ENCODE measurements at regions of chr13 and their contacts with region 1.

Region 1: DNA sequence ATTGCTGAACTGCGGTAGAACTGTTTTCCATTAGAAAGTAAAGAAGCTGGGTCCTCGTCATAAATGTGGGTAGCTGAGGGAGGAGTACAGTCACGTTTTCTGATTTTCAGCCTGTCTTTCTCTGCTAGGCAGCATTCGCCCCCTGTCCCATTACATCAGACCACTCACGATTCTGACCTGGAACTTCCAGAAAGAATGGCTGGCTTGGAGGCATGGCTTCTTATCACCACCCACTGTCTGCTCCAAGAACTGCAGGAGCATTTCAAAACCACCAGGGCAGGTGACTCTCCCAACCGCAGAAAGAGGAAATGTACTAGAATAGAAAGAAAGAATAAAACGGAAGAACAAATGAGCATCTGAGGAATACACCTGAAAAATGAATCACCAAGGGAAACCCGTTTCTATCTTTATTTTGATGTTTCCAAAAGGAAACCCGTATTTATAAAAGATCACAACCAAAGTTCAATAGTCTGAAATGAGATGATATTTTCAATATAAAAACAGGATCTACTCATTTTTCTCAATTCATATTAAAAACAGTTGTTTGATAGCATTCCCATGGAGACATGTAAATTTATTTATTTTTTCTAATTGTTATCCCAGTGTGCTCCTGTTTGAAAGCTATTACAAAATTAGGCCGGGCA is 22.1 kb upstream of the POMP start:
- DNase-seq: peak; percentile 85
- H3K4me3 ChIP-seq: no peak overlapping the region
- H3K27ac ChIP-seq: no peak overlapping the region
- H3K4me1 ChIP-seq: peaks cover 18% of the 10 kb centered on the region
- H3K27me3 ChIP-seq: no peaks in the 10 kb centered on the region
- CTCF ChIP-seq: peak; percentile 81 to 92
- POLR2A ChIP-seq: no peak

Region 2: GRCh38 chr13:28313579-28313978 is 323.2 kb before region 1 on chr13:
- CTCF ChIA-PET with region 1: interaction called, 13 read pairs
- POLR2A ChIA-PET with region 1: no interaction called
- dilution Hi-C with region 1: no loop called
- intact Hi-C with region 1: loop called (anchors 1 kb)
- DNase-seq: peak; percentile 66
- H3K4me3 ChIP-seq: no peak overlapping the region
- H3K27ac ChIP-seq: no peak overlapping the region
- H3K4me1 ChIP-seq: no peaks in the 10 kb centered on the region
- H3K27me3 ChIP-seq: no peaks in the 10 kb centered on the region
- CTCF ChIP-seq: peak; percentile 44 to 48
- POLR2A ChIP-seq: no peak

Region 3: DNA sequence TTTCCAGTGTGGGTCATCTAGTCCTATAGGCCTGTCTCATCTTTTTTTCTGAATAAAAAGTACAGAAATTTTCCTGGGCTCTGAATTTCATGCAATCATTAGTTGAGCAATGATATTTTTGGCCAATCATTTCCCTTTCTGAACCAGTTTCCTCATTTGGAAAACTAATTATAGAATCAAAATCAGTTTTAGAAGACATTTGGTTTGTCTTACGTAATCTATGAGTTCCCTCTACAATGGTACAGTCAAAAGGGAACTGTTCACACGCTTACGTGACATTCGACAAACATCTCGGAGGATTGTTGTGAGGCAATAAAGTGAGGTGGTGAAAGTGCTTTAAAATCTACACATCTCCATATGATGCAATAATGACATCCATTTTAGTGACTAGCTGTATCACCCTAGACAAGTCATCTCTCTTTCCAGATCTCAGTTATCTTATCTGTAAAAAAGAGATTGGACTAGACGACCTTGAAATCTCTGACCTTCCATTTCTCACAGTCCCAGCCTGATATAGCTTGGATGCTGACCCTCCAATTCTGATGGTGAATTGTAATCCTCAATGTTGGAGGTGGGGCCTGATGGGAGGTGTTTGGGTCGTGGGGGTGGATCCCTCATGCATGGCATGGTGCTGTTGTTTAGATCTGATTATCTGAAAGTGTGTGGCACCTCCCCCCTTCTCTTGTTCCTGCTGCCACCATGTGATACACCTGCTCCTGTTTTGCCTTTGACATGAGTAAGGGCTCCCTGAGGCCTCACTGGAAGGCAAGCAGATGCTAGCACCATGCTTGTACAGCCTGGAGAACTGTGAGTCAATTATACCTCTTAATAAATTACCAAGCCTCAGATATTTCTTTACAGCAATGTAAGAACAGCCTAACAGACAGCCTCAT is 168.5 kb before region 1 on chr13:
- CTCF ChIA-PET with region 1: interaction called, 4 read pairs
- POLR2A ChIA-PET with region 1: no interaction called
- dilution Hi-C with region 1: no loop called
- intact Hi-C with region 1: loop called (anchors 2 kb)
- DNase-seq: no peak
- H3K4me3 ChIP-seq: no peak overlapping the region
- H3K27ac ChIP-seq: no peak overlapping the region
- H3K4me1 ChIP-seq: peaks cover 57% of the 10 kb centered on the region
- H3K27me3 ChIP-seq: no peaks in the 10 kb centered on the region
- CTCF ChIP-seq: no peak
- POLR2A ChIP-seq: no peak

Region 4: DNA sequence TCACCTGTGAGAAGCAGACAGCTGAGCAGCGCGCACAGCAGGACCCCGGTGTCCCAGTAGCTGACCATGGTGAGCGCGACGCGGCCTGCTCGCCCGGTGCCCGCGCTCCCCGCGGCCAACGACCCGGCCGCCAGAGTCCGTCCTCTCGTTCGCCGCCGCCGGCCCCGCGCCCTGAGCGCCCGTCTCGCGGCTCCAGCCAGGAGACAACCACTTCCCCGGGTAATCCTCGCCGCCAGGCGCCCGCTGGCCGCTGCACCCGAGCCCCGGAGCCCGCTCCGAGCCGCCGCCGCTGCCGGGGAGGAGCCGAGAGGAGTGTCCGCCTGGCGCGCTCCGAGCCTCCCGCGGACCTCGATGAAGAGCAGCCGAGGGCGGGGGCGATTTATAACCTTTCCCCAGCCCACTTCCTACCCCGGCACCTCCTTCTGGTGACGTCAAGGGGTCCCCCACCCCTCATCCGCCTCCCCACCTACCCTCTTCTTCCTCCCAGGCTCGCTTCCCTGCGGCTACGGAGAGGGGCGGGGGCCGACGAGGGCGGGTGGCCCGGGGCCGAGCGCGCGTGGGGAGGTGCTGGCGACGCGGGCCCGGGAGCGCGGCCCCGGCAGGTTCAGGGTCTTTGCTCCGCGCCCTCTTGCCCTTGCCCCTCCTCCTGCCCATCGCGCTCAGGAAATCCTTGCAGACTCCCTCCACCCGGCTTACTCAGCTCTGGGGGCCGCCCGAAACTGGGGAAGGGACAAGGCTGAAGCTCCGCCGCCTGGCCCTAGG is 141.8 kb before region 1 on chr13 and contains the start of gene FLT1:
- CTCF ChIA-PET with region 1: interaction called, 6 read pairs
- POLR2A ChIA-PET with region 1: no interaction called
- dilution Hi-C with region 1: no loop called
- intact Hi-C with region 1: loop called (anchors 1 kb)
- DNase-seq: peak; percentile 74
- H3K4me3 ChIP-seq: peak within 1 kb of the TSS; percentile 95 to 98 (median 96)
- H3K27ac ChIP-seq: peak within 1 kb of the TSS; percentile 85
- H3K4me1 ChIP-seq: peaks cover 44% of the 10 kb centered on the region
- H3K27me3 ChIP-seq: no peaks in the 10 kb centered on the region
- CTCF ChIP-seq: no peak
- POLR2A ChIP-seq: peak; percentile 90
- total RNA-seq, gene FLT1: 104 and 178 TPM in 2 replicates

Region 5: DNA sequence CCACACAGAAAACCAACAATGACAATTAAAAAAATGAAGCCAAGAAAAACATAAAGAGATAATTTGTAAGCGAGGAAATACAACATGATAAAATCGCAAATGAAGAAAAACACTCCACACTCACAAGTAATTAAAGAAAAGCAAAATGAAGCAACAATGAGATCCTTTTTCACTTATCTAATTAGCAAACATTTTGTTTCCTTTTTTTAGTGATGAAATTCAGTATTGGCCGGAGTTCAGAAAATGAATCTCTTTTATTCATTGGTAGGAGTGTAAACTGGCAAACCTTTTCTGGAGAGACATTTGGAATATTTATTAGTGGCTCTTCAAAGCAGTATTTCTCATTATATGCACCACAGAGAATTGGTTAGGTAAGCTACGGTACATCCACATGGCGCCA is 48.5 kb before region 1 on chr13:
- CTCF ChIA-PET with region 1: no interaction called
- POLR2A ChIA-PET with region 1: no interaction called
- dilution Hi-C with region 1: no loop called
- intact Hi-C with region 1: loop called (anchors 1 kb)
- DNase-seq: no peak
- H3K4me3 ChIP-seq: no peak overlapping the region
- H3K27ac ChIP-seq: no peak overlapping the region
- H3K4me1 ChIP-seq: no peaks in the 10 kb centered on the region
- H3K27me3 ChIP-seq: peaks cover 0 to 3% of the 10 kb centered on the region in 2 experiments
- CTCF ChIP-seq: no peak
- POLR2A ChIP-seq: no peak

Region 6: GRCh38 chr13:28697441-28697840 is 60.6 kb after region 1 on chr13:
- CTCF ChIA-PET with region 1: no interaction called
- POLR2A ChIA-PET with region 1: no interaction called
- dilution Hi-C with region 1: no loop called
- intact Hi-C with region 1: no loop called
- DNase-seq: no peak
- H3K4me3 ChIP-seq: no peak overlapping the region
- H3K27ac ChIP-seq: no peak overlapping the region
- H3K4me1 ChIP-seq: no peaks in the 10 kb centered on the region
- H3K27me3 ChIP-seq: peaks cover 0 to 7% of the 10 kb centered on the region in 2 experiments
- CTCF ChIP-seq: no peak
- POLR2A ChIP-seq: no peak